ENCODE measurements at regions of chr7 and their contacts with region 1.

Region 1: GRCh38 chr7:130982160-130982638 is 248.2 kb upstream of the KLF14 start:
- DNase-seq: peak; percentile 41
- H3K4me3 Mint-ChIP-seq: no peak overlapping the region
- H3K27ac Mint-ChIP-seq: no peak overlapping the region
- H3K4me1 Mint-ChIP-seq: peaks cover 36% of the 10 kb centered on the region
- H3K27me3 Mint-ChIP-seq: no peaks in the 10 kb centered on the region

Region 2: GRCh38 chr7:130804220-130804619 is 178.0 kb before region 1 on chr7:
- CTCF ChIA-PET with region 1: no interaction called
- DNase-seq: no peak
- H3K4me3 Mint-ChIP-seq: no peak overlapping the region
- H3K27ac Mint-ChIP-seq: no peak overlapping the region
- H3K4me1 Mint-ChIP-seq: no peaks in the 10 kb centered on the region
- H3K27me3 Mint-ChIP-seq: peaks cover 29% of the 10 kb centered on the region

Region 3: DNA sequence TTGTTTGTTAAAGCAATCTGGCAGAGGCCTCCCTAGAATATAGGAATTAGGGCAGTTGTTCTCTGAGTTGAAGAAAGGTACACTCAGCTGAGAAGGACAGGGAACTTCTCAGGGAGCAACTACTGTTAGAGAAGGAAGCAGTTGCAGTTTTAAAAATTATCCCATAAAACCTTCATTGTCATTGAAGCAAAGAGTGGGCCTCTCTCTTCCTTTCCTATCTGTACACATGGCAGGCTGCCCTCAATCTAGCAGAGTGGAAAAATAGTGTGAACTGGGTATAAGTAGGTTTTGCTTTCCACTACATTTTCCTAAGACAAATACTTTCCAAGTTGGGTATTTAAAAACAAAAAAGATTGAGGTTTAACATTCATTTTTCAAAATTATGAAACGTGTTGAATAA is 11.5 kb before region 1 on chr7:
- CTCF ChIA-PET with region 1: interaction called, 30 read pairs
- DNase-seq: no peak
- H3K4me3 Mint-ChIP-seq: no peak overlapping the region
- H3K27ac Mint-ChIP-seq: peak overlapping the region; percentile 40
- H3K4me1 Mint-ChIP-seq: peaks cover 73% of the 10 kb centered on the region
- H3K27me3 Mint-ChIP-seq: no peaks in the 10 kb centered on the region

Region 4: GRCh38 chr7:131007394-131008330 is 25.5 kb after region 1 on chr7:
- CTCF ChIA-PET with region 1: interaction called, 43 read pairs
- DNase-seq: peak; percentile 73
- H3K4me3 Mint-ChIP-seq: peak overlapping the region; percentile 25
- H3K27ac Mint-ChIP-seq: peak overlapping the region; percentile 63
- H3K4me1 Mint-ChIP-seq: peaks cover 73% of the 10 kb centered on the region
- H3K27me3 Mint-ChIP-seq: no peaks in the 10 kb centered on the region

Region 5: DNA sequence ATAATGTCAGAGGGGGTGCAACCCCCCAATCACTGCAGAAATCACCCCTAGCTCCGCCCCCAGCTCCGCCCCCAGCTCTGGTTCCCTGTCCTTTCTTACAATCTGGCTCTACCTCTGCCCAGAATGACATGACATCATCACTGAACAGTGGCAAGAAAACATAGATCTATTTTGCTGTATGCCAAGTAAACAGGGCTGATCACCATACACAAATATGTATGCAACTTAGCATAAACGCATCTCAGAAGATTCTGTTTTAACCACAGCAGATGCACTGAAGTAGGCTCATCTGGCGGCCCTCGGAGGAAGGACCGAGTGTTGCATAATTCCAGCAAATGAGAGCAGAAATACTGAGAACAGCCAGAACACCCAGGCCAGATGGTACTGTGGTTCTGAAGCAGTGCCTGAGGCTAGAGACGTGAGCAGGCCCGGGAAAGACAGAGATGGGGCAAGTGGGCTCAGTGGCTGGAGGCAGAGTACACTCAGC is 45.1 kb after region 1 on chr7:
- CTCF ChIA-PET with region 1: interaction called, 10 read pairs
- DNase-seq: no peak
- H3K4me3 Mint-ChIP-seq: no peak overlapping the region
- H3K27ac Mint-ChIP-seq: peak overlapping the region; percentile 53
- H3K4me1 Mint-ChIP-seq: peaks cover 76% of the 10 kb centered on the region
- H3K27me3 Mint-ChIP-seq: no peaks in the 10 kb centered on the region

Measured in activated naive CD4-positive, alpha-beta T cell treated with anti-CD3 and anti-CD28 coated beads, Interleukin-2, amount 10 ng/mL, durations not matched to agents 7 days and 5 days (primary cell).